Esophagus muscularis mucosa (tissue), 4 donors: ENCODE measurements at regions of chr15 and their contacts with region 1.

Region 1: DNA sequence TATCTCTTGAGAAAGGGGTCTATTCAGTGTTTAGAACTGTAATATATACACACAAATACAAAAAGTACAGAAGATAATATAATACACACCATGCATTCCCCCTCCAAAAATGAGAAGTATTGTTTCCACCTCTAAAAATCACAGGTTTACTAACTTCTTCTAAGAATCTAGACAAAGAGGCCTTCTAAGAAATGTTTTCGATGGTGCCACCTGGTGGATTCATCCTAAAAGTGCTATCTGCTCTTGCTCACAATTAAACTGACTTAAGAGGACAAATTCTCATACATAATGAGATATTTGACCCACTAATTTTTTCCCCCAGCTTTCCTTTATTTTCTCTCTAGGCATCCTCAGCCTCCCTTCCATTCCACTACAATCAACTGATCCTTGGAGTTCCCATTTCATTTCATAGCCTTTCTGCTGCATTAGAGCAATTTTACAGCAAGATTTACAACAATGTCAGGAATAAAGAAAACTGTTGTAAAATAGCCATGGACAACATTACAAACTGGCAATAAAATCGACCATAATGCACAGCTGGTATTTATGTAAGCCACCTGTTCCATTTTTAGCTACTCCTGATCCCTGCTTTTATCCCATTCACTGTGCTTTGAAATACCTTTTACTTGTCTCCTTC is 124.6 kb downstream of the ARRDC4 start:
- DNase-seq: no peak
- H3K4me3 ChIP-seq: no peak overlapping the region
- H3K27ac ChIP-seq: no peak overlapping the region
- H3K4me1 ChIP-seq: no peaks in the 10 kb centered on the region
- H3K27me3 ChIP-seq: no peaks in the 10 kb centered on the region
- CTCF ChIP-seq: peak; percentile 74 to 79 (median 75)
- EP300 ChIP-seq: no peak
- POLR2A ChIP-seq: no peak

Region 2: GRCh38 chr15:97909291-97909891 is 175.7 kb before region 1 on chr15:
- intact Hi-C with region 1: loop called (anchors 2 kb)
- DNase-seq: no peak
- H3K4me3 ChIP-seq: no peak overlapping the region
- H3K27ac ChIP-seq: no peak overlapping the region
- H3K4me1 ChIP-seq: peaks cover 0 to 5% (median 4%) of the 10 kb centered on the region in 4 donors
- H3K27me3 ChIP-seq: no peaks in the 10 kb centered on the region
- CTCF ChIP-seq: peak; percentile 88 to 98 (median 91)
- EP300 ChIP-seq: no peak
- POLR2A ChIP-seq: no peak

Region 3: GRCh38 chr15:98177924-98178592 is 92.9 kb after region 1 on chr15:
- intact Hi-C with region 1: loop called (anchors 5 kb)
- DNase-seq: no peak
- H3K4me3 ChIP-seq: no peak overlapping the region
- H3K27ac ChIP-seq: no peak overlapping the region
- H3K4me1 ChIP-seq: peaks cover 0 to 5% (median 2%) of the 10 kb centered on the region in 4 donors
- H3K27me3 ChIP-seq: peaks cover 0 to 19% (median 0%) of the 10 kb centered on the region in 4 donors
- CTCF ChIP-seq: peak; percentile 62 to 78 (median 77)
- EP300 ChIP-seq: no peak
- POLR2A ChIP-seq: no peak

Region 4: GRCh38 chr15:98428253-98428989 is 343.3 kb after region 1 on chr15:
- intact Hi-C with region 1: loop called (anchors 10 kb)
- DNase-seq: no peak
- H3K4me3 ChIP-seq: peak overlapping the region; percentile 46 to 59 (median 48)
- H3K27ac ChIP-seq: peak overlapping the region; percentile 69 to 78 (median 74)
- H3K4me1 ChIP-seq: peaks cover 0 to 22% (median 18%) of the 10 kb centered on the region in 4 donors
- H3K27me3 ChIP-seq: peaks cover 0 to 9% (median 0%) of the 10 kb centered on the region in 4 donors
- CTCF ChIP-seq: peak; percentile 87 to 94 (median 93)
- EP300 ChIP-seq: no peak
- POLR2A ChIP-seq: no peak